Activated CD4-positive, alpha-beta memory T cell treated with anti-CD3 and anti-CD28 coated beads, Interleukin-2, amount 10 ng/mL, durations not matched to agents 7 days and 5 days (primary cell): ENCODE measurements at regions of chr3 and their contacts with region 1.

Region 1: DNA sequence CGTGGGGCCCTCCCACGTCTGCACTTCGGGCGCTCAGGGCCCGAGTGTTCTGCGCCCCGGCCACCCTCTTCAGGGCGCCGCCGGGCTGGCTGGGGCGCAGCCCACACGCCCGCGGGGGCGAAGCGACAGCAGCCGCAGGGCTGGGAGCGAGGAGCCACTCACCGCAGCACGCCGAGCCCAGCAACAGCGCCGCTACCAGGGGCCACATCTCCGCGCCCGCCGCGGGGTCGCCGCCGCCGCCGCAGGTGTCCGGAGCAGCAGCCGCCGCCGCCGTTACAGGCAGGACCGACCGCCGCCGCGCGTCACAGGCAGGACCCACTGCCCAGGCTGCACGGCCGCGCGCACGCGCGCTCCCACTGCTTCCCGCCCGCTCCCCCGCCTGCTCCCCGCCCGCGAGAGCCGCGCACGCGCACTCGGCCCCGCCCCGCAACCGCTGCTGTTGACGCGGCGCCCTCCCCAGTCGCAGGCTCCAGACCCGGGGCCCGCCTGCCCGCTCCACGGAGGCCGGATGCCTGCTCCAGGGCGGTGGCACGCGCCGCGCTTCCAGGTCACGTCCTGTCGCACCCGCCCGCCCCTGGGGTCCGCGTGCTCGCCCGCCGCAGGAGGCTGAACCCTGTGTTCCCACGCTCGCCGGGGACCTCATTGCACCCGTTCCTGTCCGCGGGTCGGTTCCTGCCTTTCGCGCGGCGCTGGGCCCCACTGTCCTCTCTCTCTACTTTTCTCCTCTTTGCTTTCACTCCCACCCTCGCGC is at the start of gene CD47:
- DNase-seq: peak; percentile 97
- H3K4me3 Mint-ChIP-seq: peak within 1 kb of the TSS; percentile 99
- H3K27ac Mint-ChIP-seq: peak within 1 kb of the TSS; percentile 99
- H3K4me1 Mint-ChIP-seq: peaks cover 25% of the 10 kb centered on the region
- H3K27me3 Mint-ChIP-seq: no peaks in the 10 kb centered on the region
- total RNA-seq, gene CD47: 153 to 161 TPM

Region 2: DNA sequence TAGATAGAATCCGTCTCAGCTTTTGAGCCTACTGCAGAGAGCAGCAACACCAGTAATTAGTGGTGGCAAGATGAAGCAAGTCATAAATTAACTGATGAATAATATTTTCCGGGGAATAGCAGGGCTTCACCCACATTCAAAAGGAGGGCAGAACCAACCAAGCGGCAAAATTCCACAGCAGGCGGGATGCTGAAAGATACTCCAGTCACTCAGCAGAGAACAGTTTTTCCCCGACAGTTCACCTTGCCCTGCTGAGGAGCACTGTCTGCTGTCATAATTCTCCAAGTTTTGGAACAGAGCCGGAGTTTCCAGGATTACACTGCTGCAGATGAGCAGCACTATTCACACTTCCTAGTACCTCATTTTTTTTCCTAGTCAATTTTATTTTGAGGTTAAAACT is 274.8 kb before region 1 on chr3:
- CTCF ChIA-PET with region 1: no interaction called
- POLR2A ChIA-PET with region 1: no interaction called
- DNase-seq: no peak
- H3K4me3 Mint-ChIP-seq: no peak overlapping the region
- H3K27ac Mint-ChIP-seq: no peak overlapping the region
- H3K4me1 Mint-ChIP-seq: peaks cover 2% of the 10 kb centered on the region
- H3K27me3 Mint-ChIP-seq: peaks cover 7% of the 10 kb centered on the region

Region 3: GRCh38 chr3:107987036-107987947 is 103.6 kb before region 1 on chr3:
- CTCF ChIA-PET with region 1: no interaction called
- POLR2A ChIA-PET with region 1: interaction called, 27 read pairs
- DNase-seq: no peak
- H3K4me3 Mint-ChIP-seq: no peak overlapping the region
- H3K27ac Mint-ChIP-seq: peak overlapping the region; percentile 89
- H3K4me1 Mint-ChIP-seq: peaks cover 45% of the 10 kb centered on the region
- H3K27me3 Mint-ChIP-seq: no peaks in the 10 kb centered on the region

Region 4: GRCh38 chr3:108079877-108080659 is 10.8 kb before region 1 on chr3:
- CTCF ChIA-PET with region 1: interaction called, 3 read pairs
- POLR2A ChIA-PET with region 1: interaction called, 13 read pairs
- DNase-seq: no peak
- H3K4me3 Mint-ChIP-seq: no peak overlapping the region
- H3K27ac Mint-ChIP-seq: no peak overlapping the region
- H3K4me1 Mint-ChIP-seq: peaks cover 55% of the 10 kb centered on the region
- H3K27me3 Mint-ChIP-seq: no peaks in the 10 kb centered on the region

Region 5: GRCh38 chr3:108133858-108134554 is 43.1 kb after region 1 on chr3:
- CTCF ChIA-PET with region 1: interaction called, 3 read pairs
- POLR2A ChIA-PET with region 1: interaction called, 259 read pairs
- DNase-seq: no peak
- H3K4me3 Mint-ChIP-seq: peak overlapping the region; percentile 74
- H3K27ac Mint-ChIP-seq: peak overlapping the region; percentile 83
- H3K4me1 Mint-ChIP-seq: peaks cover 74% of the 10 kb centered on the region
- H3K27me3 Mint-ChIP-seq: no peaks in the 10 kb centered on the region

Region 6: DNA sequence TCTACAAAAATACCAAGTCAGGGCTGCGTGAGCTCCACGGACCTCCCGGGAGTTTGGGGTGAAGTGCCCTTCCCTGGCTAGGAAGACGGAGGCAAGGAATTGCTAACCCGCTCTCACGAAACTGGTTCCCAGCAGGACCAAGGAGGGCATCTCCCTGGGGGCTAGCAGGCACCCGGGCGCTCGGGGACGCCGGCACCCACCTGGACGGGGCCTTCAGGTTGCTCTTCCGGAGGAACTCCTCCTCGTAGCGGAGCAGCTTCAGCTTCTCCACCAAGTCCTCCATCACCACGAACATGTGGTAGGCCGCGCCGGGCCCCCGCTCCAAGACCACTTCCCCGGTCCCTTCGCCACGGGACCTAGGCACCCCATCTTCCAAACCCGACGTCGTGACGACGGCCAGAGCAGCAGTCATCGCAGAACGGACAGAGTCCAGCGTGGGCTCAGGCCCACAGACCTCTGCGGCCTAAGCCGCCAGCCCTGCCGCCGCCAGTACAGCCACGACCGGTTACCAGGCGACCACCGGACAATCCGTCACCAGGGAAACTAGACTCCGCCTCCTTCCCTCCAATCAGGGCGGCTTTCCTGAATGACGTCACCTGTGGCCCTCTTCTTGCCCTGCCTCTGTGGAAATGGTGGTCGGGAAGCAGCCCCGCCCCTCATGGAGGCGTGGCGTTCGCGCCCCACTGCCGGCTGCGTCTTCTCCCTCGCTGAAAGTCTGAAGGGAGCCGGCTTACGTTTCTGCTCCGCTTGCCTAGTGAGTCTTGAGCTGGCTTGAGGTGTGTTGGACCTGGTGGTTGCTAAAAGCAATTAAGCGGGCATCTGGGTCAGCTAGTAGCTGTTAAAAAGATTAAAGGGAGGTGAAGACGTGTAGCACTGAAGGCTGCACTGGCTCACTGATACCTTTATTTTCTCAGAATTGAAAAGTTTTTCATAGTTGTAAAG is 131.3 kb after region 1 on chr3 and contains the start of gene IFT57:
- CTCF ChIA-PET with region 1: interaction called, 4 read pairs
- POLR2A ChIA-PET with region 1: interaction called, 38 read pairs
- DNase-seq: peak; percentile 96
- H3K4me3 Mint-ChIP-seq: peak within 1 kb of the TSS; percentile 97
- H3K27ac Mint-ChIP-seq: peak within 1 kb of the TSS; percentile 97
- H3K4me1 Mint-ChIP-seq: peaks cover 46% of the 10 kb centered on the region
- H3K27me3 Mint-ChIP-seq: no peaks in the 10 kb centered on the region
- total RNA-seq, gene IFT57: 21.0 to 28.0 TPM

Region 7: DNA sequence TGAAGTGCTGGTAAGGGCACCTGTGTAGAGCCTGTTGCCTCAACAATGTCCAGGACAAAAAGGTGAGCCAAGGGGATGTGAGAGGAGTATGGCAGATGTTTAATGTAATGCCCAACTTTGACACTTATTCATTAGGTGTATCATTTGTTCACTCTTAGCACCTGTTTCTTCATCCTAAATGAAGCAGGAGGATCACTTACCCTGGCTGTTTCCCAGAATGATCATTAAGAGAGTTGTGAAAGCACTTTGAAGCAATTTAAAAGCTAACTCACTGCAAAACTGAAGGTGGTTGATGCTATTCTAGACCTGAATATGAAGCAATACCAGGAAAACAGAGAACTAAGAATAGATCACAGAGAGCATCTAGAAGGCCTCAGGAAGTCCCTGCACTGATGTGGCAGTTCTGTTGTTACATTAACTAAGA is 202.0 kb after region 1 on chr3:
- CTCF ChIA-PET with region 1: no interaction called
- POLR2A ChIA-PET with region 1: interaction called, 11 read pairs
- DNase-seq: no peak
- H3K4me3 Mint-ChIP-seq: peak overlapping the region; percentile 7
- H3K27ac Mint-ChIP-seq: peak overlapping the region; percentile 89
- H3K4me1 Mint-ChIP-seq: peaks cover 59% of the 10 kb centered on the region
- H3K27me3 Mint-ChIP-seq: no peaks in the 10 kb centered on the region